Posterior vena cava (tissue), 2 donors: ENCODE measurements at regions of chr20 and their contacts with region 1.

Region 1: DNA sequence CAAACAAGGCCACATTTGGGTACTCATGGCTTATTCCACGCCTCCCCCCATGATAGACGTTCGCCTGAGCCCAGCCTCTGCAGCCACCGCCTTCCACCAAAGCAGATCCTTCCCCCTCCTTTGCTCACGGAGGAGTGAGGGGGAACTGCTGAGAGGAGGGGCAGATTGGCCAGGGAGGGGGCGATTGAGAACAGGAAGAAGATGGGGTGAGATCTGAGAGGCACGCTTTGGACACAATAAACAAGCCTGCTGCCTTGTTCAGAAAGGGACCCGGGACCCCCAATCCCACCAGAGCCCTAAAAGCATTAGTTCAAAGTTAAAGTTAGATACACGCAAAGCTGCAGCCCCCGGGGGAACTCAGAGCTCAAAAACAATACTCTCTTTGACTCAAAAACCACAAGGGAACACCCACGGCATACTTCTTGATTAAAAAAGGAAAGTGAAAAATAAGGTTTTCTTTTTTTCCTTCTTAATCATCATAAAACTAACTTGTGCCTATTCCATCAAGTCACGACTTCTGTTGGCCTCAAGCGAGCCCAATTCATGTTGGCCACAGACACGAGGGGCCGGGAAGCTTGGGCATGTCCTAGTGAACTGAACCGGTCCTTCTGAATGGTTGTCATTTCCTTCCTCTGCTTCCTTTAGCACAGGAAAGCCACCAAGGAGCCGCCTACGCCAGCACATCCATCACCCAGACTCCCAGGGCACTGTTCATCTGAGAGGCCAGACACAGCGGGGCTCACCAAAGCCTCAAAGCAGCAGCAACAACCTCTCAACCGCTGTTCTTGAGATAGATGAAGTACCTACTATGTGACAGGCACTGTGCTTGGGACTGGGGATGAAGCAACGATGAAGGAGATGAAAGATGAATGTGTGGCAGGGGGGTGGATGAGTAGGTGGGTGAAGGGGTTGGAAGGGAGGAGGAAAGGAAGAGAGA is 44.7 kb downstream of the NFATC2 start:
- DNase-seq: no peak

Region 2: GRCh38 chr20:50980851-50981713 is 516.7 kb before region 1 on chr20:
- intact Hi-C with region 1: no loop called
- DNase-seq: no peak

Region 3: DNA sequence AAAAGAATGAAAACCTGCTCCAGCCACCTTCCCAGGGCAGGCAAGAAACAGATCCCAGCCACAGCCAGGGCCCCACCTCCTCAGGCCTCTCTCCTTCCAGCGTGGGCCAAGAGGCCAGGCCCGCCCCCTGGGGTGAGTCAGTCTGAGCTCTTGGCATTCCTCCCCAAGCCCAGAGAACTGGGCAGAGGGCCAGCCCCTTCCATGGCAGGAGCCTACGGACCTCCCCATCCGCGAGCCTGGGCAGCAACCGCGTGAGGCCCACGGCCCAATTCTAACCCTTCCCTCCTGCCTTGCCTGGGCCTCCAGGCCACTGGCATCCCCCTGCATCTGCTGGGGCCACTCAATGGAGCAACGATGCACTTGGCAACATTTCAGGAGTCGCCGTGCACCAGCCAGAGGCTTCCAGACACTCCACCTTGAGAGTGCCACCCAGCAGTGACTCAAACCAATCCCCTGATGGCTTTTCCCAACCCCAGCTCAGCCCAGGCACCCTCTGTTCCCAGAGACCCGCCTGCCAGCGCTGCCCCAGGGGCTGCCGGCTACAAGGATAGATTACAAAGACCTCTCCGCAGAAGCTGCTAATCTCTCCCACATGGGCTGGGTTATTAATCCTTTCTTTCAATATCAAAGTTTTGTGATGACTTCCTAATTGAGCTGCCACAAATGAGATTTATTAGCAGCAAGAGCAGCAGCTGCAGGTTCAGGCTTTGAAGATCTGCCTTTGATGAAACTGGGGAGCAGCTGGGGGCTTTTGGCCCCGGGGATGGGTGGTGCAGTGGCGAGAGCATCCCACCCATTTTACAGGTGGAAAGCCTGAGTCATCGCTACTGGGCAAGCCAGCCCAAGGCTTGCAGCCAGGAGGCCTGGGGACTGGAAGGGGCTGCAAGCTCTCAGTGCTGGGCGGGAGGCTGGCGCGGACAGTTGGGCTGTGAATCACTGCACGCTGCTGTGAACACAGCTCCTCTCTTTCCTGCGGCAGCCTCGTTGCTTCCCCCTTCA is 41.0 kb before region 1 on chr20:
- intact Hi-C with region 1: no loop called
- DNase-seq: peak; percentile 98

Region 4: DNA sequence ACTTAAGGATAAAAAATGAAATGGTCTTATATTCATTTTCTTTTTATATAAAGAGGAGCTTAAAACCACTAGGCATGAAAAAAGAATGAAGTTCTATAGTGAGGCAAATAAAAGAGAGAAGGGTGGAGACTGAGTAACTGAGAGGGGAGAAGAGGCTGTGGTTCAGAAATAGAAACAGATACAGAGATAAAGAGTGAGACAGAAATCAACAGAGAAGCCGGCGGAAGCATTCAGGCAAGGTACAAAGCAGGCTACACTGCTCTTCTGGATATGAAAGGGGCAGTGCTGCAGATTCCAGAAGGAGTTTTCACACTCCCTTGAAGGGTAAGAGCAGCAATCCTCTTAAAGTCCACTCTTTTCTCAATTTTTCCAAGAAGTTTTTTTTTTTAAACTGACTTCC is 14.8 kb after region 1 on chr20:
- intact Hi-C with region 1: loop called in 1 of 2 experiments (anchors 1 kb)
- DNase-seq: no peak

Region 5: DNA sequence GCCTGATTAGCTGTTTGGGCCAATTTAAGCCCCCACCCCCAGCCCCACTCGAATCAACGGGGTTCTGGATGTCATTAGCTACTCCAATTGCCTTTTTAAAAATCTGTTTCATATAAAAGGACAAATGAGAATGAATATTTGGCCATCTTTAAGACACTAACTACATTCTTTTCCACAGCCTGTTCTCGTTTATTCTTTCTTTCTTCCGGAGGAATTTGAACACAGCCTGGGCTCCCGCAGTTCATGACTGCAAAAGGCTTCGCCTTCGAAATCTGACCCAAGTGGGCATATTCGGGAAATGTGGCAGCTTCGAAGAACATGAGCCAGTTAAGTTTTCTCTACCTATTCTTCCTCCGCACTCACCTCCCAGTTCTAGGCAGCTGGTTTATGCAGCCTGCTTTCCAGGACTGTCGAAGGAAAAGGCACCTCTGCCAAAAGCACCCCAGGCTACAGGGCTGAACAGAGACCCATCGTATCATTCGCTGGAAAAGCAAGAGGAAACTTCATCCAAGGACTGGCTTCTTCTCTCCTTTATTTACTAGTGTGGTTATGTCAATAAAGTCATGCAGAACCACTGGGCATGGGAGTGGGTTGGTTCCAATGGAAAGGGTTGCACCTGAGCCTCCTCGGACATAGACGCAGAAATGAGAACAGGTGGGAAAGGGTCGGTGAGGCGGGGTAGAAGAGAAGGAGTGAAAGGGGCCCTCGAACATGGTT is 94.2 kb after region 1 on chr20:
- intact Hi-C with region 1: loop called in 1 of 2 experiments (anchors 1 kb)
- DNase-seq: no peak